Mammary epithelial cell (primary cell): ENCODE measurements at regions of chr2 and their contacts with region 1.

Region 1: GRCh38 chr2:120722568-120723421 is 12.9 kb upstream of the GLI2 start:
- DNase-seq: no peak
- H3K4me3 ChIP-seq: no peak overlapping the region
- H3K27ac ChIP-seq: no peak overlapping the region
- H3K4me1 ChIP-seq: no peaks in the 10 kb centered on the region
- H3K27me3 ChIP-seq: peaks cover 3% of the 10 kb centered on the region
- CTCF ChIP-seq: no peak

Region 2: GRCh38 chr2:120892967-120893667 is 170.3 kb after region 1 on chr2:
- CTCF ChIA-PET with region 1: no interaction called
- dilution Hi-C with region 1: no loop called
- in situ Hi-C with region 1: no loop called
- intact Hi-C with region 1: no loop called
- DNase-seq: no peak
- H3K4me3 ChIP-seq: no peak overlapping the region
- H3K27ac ChIP-seq: no peak overlapping the region
- H3K4me1 ChIP-seq: no peaks in the 10 kb centered on the region
- H3K27me3 ChIP-seq: no peaks in the 10 kb centered on the region
- CTCF ChIP-seq: no peak

Region 3: GRCh38 chr2:120914839-120915521 is 192.2 kb after region 1 on chr2:
- CTCF ChIA-PET with region 1: no interaction called
- dilution Hi-C with region 1: no loop called
- in situ Hi-C with region 1: no loop called
- intact Hi-C with region 1: no loop called
- DNase-seq: peak; percentile 69
- H3K4me3 ChIP-seq: no peak overlapping the region
- H3K27ac ChIP-seq: no peak overlapping the region
- H3K4me1 ChIP-seq: peaks cover 17% of the 10 kb centered on the region
- H3K27me3 ChIP-seq: no peaks in the 10 kb centered on the region
- CTCF ChIP-seq: peak in 1 of 2 donors; percentile 2

Region 4: DNA sequence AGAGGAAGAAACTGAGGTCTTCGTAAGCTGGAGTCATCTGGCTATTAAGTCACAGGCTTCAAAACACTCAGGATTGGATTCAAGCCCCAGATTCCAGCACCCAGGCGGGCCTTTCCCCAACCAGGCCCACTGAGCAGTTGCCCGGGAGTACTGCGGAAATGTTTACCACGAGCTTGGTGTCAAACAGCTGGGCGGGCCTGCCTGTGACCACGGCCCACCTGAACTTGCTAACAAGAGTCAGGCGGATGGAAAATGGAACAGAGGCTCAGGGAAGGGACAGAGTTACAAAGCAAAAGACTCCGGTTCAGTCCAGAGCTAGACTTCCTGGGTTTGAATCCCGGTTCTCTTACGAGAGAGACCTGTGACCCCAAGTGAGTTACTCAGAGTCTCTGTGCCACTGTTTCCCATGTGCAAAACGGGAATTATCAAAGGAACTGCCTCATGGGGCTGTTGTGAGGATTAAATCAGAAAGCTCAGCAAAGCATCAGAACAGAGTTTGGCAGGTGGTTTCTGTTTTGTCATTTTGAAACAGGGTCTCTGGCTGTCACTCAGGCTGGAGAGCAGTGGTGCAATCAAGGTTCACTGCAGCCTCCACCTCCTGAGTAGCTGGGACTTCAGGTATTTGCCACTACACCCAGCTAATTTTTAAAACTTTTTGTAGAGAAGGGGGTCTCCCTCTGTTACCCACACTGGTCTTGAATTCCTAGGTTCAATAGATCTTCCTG is 611.2 kb after region 1 on chr2:
- CTCF ChIA-PET with region 1: no interaction called
- dilution Hi-C with region 1: no loop called
- in situ Hi-C with region 1: loop called in 1 of 2 experiments (anchors 25 kb)
- intact Hi-C with region 1: no loop called
- DNase-seq: no peak
- H3K4me3 ChIP-seq: no peak overlapping the region
- H3K27ac ChIP-seq: no peak overlapping the region
- H3K4me1 ChIP-seq: no peaks in the 10 kb centered on the region
- H3K27me3 ChIP-seq: no peaks in the 10 kb centered on the region
- CTCF ChIP-seq: no peak